ENCODE measurements at regions of chr16 and their contacts with region 1.

Region 1: DNA sequence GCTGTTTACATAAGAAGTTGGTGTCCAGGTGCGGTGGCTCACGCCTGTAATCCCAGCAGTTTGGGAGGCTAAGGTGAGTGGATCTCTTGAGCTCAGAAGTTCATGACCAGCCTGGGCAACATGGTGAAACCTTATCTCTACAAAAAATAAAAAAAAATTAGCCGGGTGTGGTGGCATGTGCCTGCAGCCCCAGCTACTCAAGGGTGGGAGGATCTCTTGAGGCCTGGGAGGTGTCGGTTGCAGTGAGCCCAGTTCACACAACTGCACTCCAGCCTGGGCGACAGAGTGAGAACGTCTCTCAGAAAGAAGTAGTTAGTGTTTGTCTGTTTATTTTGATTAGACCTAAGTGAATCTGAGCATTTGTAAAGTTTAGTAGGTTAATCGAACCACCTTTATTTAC is 12.8 kb downstream of the DDX19A start:
- DNase-seq: no peak
- ATAC-seq: no peak
- H3K4me3 ChIP-seq: no peak overlapping the region
- H3K27ac ChIP-seq: no peak overlapping the region
- H3K4me1 ChIP-seq: no peaks in the 10 kb centered on the region
- H3K27me3 ChIP-seq: no peaks in the 10 kb centered on the region
- CTCF ChIP-seq: no peak
- EP300 ChIP-seq: no peak
- POLR2A ChIP-seq: no peak
- RAD21 ChIP-seq: no peak

Region 2: GRCh38 chr16:70345840-70346239 is 13.7 kb before region 1 on chr16:
- CTCF ChIA-PET with region 1: no interaction called
- POLR2A ChIA-PET with region 1: interaction called, 21 read pairs
- in situ Hi-C with region 1: no loop called
- intact Hi-C with region 1: no loop called
- DNase-seq: no peak
- ATAC-seq: no peak
- H3K4me3 ChIP-seq: peak overlapping the region; percentile 84
- H3K27ac ChIP-seq: peak overlapping the region; percentile 93
- H3K4me1 ChIP-seq: peaks cover 4 to 6% of the 10 kb centered on the region in 2 experiments; a peak in 4 of 5 replicates
- H3K27me3 ChIP-seq: no peaks in the 10 kb centered on the region
- CTCF ChIP-seq: no peak
- EP300 ChIP-seq: no peak
- POLR2A ChIP-seq: no peak
- RAD21 ChIP-seq: no peak

Region 3: GRCh38 chr16:70375636-70376611 is 16.4 kb after region 1 on chr16:
- CTCF ChIA-PET with region 1: no interaction called
- POLR2A ChIA-PET with region 1: interaction called, 10 read pairs
- in situ Hi-C with region 1: no loop called
- intact Hi-C with region 1: no loop called
- DNase-seq: no peak
- ATAC-seq: peak; percentile 7; the same call in 1 of the 3 replicates
- H3K4me3 ChIP-seq: no peak overlapping the region
- H3K27ac ChIP-seq: no peak overlapping the region
- H3K4me1 ChIP-seq: peaks cover 0 to 9% of the 10 kb centered on the region in 2 experiments; a peak in 2 of 5 replicates
- H3K27me3 ChIP-seq: no peaks in the 10 kb centered on the region
- CTCF ChIP-seq: no peak
- EP300 ChIP-seq: no peak
- POLR2A ChIP-seq: peak; percentile 82
- RAD21 ChIP-seq: no peak